Left lung (tissue), 14 donors: ENCODE measurements at regions of chr2 and their contacts with region 1.

Region 1: GRCh38 chr2:157940024-157940423 is 63.9 kb upstream of the ACVR1 start:
- DNase-seq: no peak
- ATAC-seq: no peak
- H3K4me3 ChIP-seq: no peak overlapping the region
- H3K27ac ChIP-seq: no peak overlapping the region
- H3K4me1 ChIP-seq: no peaks in the 10 kb centered on the region
- H3K27me3 ChIP-seq: no peaks in the 10 kb centered on the region
- CTCF ChIP-seq: no peak

Region 2: GRCh38 chr2:157722580-157723234 is 217.3 kb before region 1 on chr2:
- intact Hi-C with region 1: loop called in 1 of 2 experiments (anchors 10 kb)
- DNase-seq: peak in 1 of 4 donors; percentile 2
- ATAC-seq: no peak
- H3K4me3 ChIP-seq: no peak overlapping the region
- H3K27ac ChIP-seq: no peak overlapping the region
- H3K4me1 ChIP-seq: no peaks in the 10 kb centered on the region
- H3K27me3 ChIP-seq: no peaks in the 10 kb centered on the region
- CTCF ChIP-seq: no peak

Region 3: GRCh38 chr2:158753641-158754611 is 813.9 kb after region 1 on chr2:
- intact Hi-C with region 1: no loop called
- DNase-seq: peak in 2 of 4 donors; percentile 69 to 80
- ATAC-seq: peak; percentile 96
- H3K4me3 ChIP-seq: no peak overlapping the region
- H3K27ac ChIP-seq: no peak overlapping the region
- H3K4me1 ChIP-seq: peaks cover 0 to 5% of the 10 kb centered on the region in 2 donors
- H3K27me3 ChIP-seq: no peaks in the 10 kb centered on the region
- CTCF ChIP-seq: peak; percentile 79 to 89